Gastrocnemius medialis (tissue), 4 donors: ENCODE measurements at regions of chr9 and their contacts with region 1.

Region 1: GRCh38 chr9:122125158-122125508 is 32.0 kb upstream of the TTLL11 start:
- DNase-seq: peak; percentile 58 to 65
- ATAC-seq: peak; percentile 79 to 81
- H3K4me3 ChIP-seq: no peak overlapping the region
- H3K27ac ChIP-seq: no peak overlapping the region
- H3K4me1 ChIP-seq: peaks cover 0 to 8% of the 10 kb centered on the region in 2 donors
- H3K27me3 ChIP-seq: peaks cover 9 to 18% (median 14%) of the 10 kb centered on the region in 3 donors
- CTCF ChIP-seq: peak; percentile 92 to 97 (median 96)
- POLR2A ChIP-seq: no peak

Region 2: GRCh38 chr9:121798941-121799340 is 326.2 kb before region 1 on chr9:
- in situ Hi-C with region 1: no loop called
- intact Hi-C with region 1: no loop called
- DNase-seq: no peak
- ATAC-seq: no peak
- H3K4me3 ChIP-seq: no peak overlapping the region
- H3K27ac ChIP-seq: no peak overlapping the region
- H3K4me1 ChIP-seq: no peaks in the 10 kb centered on the region
- H3K27me3 ChIP-seq: no peaks in the 10 kb centered on the region
- CTCF ChIP-seq: no peak
- POLR2A ChIP-seq: no peak

Region 3: DNA sequence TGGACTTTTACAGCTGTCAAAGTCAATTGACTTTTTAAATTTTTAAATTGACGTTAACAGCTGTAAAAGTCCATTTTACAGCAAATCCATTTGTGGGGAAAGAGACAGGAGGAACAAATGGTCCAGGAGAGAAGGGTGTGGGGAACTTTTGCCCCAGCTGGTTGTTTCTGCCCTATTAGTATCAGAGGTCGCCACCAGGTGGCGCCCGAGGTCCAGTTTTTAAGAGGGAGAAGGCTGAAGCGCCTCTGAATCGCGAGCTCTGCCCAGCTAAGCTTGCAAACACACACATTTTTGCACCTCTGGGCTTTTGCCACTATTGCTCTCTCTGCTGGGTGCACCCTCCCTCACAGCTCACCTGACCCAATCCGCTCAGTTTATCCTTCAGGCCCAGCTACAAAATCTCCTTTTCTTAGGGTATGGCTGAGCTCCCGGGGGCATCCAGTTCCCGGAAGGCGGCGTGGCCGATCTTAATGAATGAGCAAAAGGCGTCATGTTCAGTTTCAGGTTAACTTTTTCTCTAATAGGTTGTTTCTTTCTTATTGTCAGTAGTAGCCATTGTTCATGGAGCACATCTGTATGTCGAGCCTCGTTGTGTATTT is 25.8 kb before region 1 on chr9:
- in situ Hi-C with region 1: no loop called
- intact Hi-C with region 1: loop called (anchors 1 kb)
- DNase-seq: peak; percentile 47 to 74
- ATAC-seq: peak; percentile 72 to 85
- H3K4me3 ChIP-seq: peak overlapping the region in 3 of 4 donors; percentile 8 to 61 (median 45)
- H3K27ac ChIP-seq: no peak overlapping the region
- H3K4me1 ChIP-seq: peaks cover 4 to 18% of the 10 kb centered on the region in 2 donors
- H3K27me3 ChIP-seq: no peaks in the 10 kb centered on the region
- CTCF ChIP-seq: peak; percentile 74 to 91 (median 87)
- POLR2A ChIP-seq: no peak

Region 4: DNA sequence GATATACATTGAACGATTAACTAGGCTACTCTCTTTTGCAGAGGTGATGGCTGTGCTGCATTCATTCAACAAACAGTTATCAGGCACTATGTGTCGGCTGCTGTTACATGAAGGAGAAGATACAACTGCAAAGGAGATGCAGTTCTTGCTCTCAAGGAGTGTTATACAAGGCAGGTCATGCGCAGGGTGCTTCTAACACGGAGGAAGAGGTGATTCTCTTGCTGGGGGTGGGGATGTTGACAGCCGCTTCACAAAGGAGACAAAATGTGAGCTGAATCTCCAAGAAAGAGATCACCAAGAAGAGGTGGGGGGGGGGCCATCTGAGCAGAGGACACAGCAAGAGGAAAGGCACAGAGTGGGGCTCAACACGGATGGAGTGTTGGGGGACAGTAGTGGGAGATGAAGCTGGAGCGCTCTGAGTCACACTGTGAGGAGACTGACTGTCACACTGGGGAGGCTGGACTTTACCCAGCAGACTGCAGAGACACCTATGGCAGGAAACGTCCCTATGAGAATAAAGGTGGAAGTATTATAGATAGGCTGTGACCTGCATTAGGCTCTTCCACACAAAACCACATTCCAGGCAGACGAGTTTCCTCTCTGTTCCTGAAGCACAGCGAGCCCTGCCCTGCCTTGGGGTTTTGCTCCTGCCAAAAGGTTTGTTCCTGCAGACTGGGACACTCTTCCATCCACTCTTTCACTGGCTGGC is 13.6 kb after region 1 on chr9:
- in situ Hi-C with region 1: no loop called
- intact Hi-C with region 1: no loop called
- DNase-seq: no peak
- ATAC-seq: no peak
- H3K4me3 ChIP-seq: no peak overlapping the region
- H3K27ac ChIP-seq: no peak overlapping the region
- H3K4me1 ChIP-seq: peaks cover 17 to 25% of the 10 kb centered on the region in 2 donors
- H3K27me3 ChIP-seq: no peaks in the 10 kb centered on the region
- CTCF ChIP-seq: no peak
- POLR2A ChIP-seq: no peak

Region 5: GRCh38 chr9:122264360-122265148 is 139.4 kb after region 1 on chr9 and contains the starts of genes MRRF and RBM18:
- in situ Hi-C with region 1: no loop called
- intact Hi-C with region 1: loop called (anchors 10 kb)
- DNase-seq: peak; percentile 82 to 89
- ATAC-seq: peak; percentile 87 to 94
- H3K4me3 ChIP-seq: peak within 1 kb of the TSS; percentile 66 to 95 (median 86)
- H3K27ac ChIP-seq: peak within 1 kb of the TSS; percentile 92 to 100 (median 98)
- H3K4me1 ChIP-seq: peaks cover 42 to 47% of the 10 kb centered on the region in 2 donors
- H3K27me3 ChIP-seq: no peaks in the 10 kb centered on the region
- CTCF ChIP-seq: peak in 1 of 5 experiments; percentile 39
- POLR2A ChIP-seq: peak; percentile 73 to 77
- total RNA-seq, gene MRRF: 33.2 to 55.7 (median 47.2) TPM
- total RNA-seq, gene RBM18: 10.6 to 26.6 (median 21.8) TPM

Region 6: DNA sequence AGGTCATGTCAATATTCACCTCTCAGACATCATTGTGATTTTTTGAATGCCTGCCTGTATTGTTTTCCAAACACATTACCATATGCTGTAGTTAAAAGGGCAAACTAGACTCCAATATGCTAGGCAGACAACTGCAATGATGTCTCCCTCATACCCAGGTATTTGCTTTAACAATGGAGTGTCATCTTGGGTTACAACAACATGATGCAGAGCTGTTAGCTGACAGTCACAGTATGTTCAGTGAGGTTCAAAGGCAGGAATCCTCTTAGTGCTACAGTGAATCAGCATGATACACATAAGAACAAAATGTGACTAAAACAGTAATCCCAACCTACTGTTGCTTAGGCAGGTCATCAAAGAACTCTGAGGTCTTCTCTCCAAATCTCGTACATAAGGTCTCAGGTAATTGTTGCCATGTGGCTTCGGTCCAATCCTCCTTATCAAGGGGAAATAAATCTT is 328.6 kb after region 1 on chr9:
- in situ Hi-C with region 1: loop called in 1 of 4 experiments (anchors 25 kb)
- intact Hi-C with region 1: loop called (anchors 10 kb)
- DNase-seq: no peak
- ATAC-seq: no peak
- H3K4me3 ChIP-seq: no peak overlapping the region
- H3K27ac ChIP-seq: no peak overlapping the region
- H3K4me1 ChIP-seq: no peaks in the 10 kb centered on the region
- H3K27me3 ChIP-seq: no peaks in the 10 kb centered on the region
- CTCF ChIP-seq: no peak
- POLR2A ChIP-seq: no peak

Region 7: DNA sequence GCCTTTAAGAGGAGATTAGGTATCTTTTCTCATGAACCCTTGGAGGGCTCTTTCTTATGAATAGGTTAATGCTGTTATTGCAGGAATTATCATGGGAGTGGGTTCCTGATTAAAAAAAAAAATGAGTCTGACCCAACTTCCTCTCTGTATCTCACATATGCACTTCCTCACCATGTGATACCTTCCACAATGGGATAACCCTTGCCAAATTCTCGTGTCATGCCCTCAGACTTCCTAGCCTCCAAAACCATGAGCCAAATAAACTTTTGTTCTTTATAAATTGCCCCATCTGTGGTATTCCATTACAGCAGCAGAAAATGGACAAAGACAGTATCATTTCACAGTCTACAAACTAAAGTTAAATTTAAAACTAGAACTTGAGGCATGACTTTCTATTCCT is 531.2 kb after region 1 on chr9:
- in situ Hi-C with region 1: no loop called
- intact Hi-C with region 1: no loop called
- DNase-seq: no peak
- ATAC-seq: no peak
- H3K4me3 ChIP-seq: no peak overlapping the region
- H3K27ac ChIP-seq: no peak overlapping the region
- H3K4me1 ChIP-seq: no peaks in the 10 kb centered on the region
- H3K27me3 ChIP-seq: no peaks in the 10 kb centered on the region
- CTCF ChIP-seq: no peak
- POLR2A ChIP-seq: no peak

Region 8: DNA sequence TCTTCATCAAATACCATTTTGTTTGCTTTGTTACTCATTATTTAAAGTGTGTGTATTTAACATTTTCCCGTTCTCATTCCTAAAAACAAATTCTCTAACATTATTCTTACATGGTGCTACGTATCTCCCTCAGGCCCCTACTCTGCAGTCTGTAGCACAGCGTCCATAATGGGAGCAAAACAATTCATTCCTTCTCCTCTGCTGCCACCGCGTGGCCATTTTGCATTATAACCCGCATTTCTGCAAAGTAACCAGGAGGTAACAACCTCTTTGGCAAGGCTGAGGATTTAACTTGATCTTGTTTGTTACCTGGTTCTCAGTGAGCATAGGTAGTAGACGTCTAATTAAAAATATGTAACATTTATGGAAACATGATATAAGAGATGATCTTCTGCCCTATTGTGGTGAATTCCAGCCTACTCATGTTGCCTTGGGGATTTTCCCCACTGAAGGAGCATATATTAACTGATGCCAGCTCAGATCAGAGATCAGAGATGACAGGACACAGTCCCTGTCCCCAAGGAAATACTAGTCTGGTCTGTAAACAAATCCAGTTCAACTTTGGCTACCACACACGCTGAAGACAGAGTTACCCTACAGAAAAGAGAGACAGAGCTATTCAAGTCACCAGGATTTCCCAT is 685.3 kb after region 1 on chr9:
- in situ Hi-C with region 1: loop called (anchors 10 to 25 kb)
- intact Hi-C with region 1: loop called (anchors 10 kb)
- DNase-seq: peak; percentile 35 to 62
- ATAC-seq: peak; percentile 89 to 94
- H3K4me3 ChIP-seq: no peak overlapping the region
- H3K27ac ChIP-seq: no peak overlapping the region
- H3K4me1 ChIP-seq: no peaks in the 10 kb centered on the region
- H3K27me3 ChIP-seq: no peaks in the 10 kb centered on the region
- CTCF ChIP-seq: peak; percentile 74 to 80 (median 77)
- POLR2A ChIP-seq: no peak